IMR-90 (cell line): ENCODE measurements at regions of chr18 and their contacts with region 1.

Region 1: GRCh38 chr18:4653418-4653817 is 198.3 kb upstream of the DLGAP1 start:
- DNase-seq: no peak
- ATAC-seq: no peak
- H3K4me3 ChIP-seq: no peak overlapping the region
- H3K27ac ChIP-seq: no peak overlapping the region
- H3K4me1 ChIP-seq: no peaks in the 10 kb centered on the region
- H3K27me3 ChIP-seq: no peaks in the 10 kb centered on the region
- CTCF ChIP-seq: no peak
- POLR2A ChIP-seq: no peak
- RAD21 ChIP-seq: no peak

Region 2: GRCh38 chr18:4549164-4549860 is 104.1 kb before region 1 on chr18:
- CTCF ChIA-PET with region 1: no interaction called
- POLR2A ChIA-PET with region 1: interaction called, 12 read pairs
- dilution Hi-C with region 1: no loop called
- in situ Hi-C with region 1: no loop called
- intact Hi-C with region 1: no loop called
- DNase-seq: no peak
- ATAC-seq: no peak
- H3K4me3 ChIP-seq: no peak overlapping the region
- H3K27ac ChIP-seq: no peak overlapping the region
- H3K4me1 ChIP-seq: no peaks in the 10 kb centered on the region
- H3K27me3 ChIP-seq: no peaks in the 10 kb centered on the region
- CTCF ChIP-seq: no peak
- POLR2A ChIP-seq: no peak
- RAD21 ChIP-seq: no peak